Caco-2 (cell line): ENCODE measurements at regions of chr17 and their contacts with region 1.

Region 1: DNA sequence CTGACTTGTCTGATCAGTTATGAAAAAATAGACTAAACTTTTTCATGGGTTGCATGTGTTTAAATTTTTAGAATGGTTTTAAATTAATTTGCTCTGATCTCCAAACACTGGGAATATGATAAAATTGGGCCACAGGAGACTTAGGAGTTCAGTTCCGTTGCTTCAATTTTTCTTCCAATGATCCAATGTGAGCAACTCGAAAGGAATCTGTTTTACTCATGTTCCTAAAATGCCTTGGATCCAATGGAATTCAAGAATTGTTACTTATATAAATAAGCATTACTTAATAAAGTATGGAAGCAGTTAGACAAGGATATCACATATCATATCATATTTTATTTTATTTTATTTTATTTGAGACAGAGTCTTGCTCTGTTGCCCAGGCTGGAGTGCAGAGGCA is 56.0 kb upstream of the NACA2 start:
- DNase-seq: no peak
- H3K4me3 ChIP-seq: no peak overlapping the region
- H3K4me3 Mint-ChIP-seq: no peak overlapping the region
- H3K27ac Mint-ChIP-seq: no peak overlapping the region
- H3K4me1 ChIP-seq: no peaks in the 10 kb centered on the region
- H3K4me1 Mint-ChIP-seq: no peaks in the 10 kb centered on the region
- H3K27me3 ChIP-seq: no peaks in the 10 kb centered on the region
- H3K27me3 Mint-ChIP-seq: peaks cover 7% of the 10 kb centered on the region
- CTCF ChIP-seq: no peak

Region 2: DNA sequence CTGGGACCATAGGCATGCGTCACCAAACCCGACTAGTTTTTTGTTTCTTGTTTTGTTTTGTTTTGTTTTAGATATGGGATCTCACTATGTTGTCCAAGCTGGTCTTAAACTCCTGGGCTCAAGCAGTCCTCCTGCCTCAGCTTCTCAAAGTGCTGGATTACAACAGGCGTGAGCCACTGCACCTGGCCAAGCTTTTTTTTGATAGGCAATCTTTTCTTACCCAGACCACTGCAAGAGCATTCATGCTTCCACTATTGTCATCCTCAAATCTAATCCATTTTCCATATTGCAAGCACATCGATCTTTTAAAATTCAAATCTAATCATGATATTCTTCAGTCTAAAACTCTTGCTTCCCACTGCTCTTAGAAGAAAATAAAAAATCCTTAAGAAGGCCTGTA is 45.8 kb before region 1 on chr17:
- CTCF ChIA-PET with region 1: no interaction called
- POLR2A ChIA-PET with region 1: interaction called, 11 read pairs
- intact Hi-C with region 1: no loop called
- DNase-seq: no peak
- H3K4me3 ChIP-seq: no peak overlapping the region
- H3K4me3 Mint-ChIP-seq: no peak overlapping the region
- H3K27ac Mint-ChIP-seq: no peak overlapping the region
- H3K4me1 ChIP-seq: no peaks in the 10 kb centered on the region
- H3K4me1 Mint-ChIP-seq: no peaks in the 10 kb centered on the region
- H3K27me3 ChIP-seq: no peaks in the 10 kb centered on the region
- H3K27me3 Mint-ChIP-seq: peaks cover 1% of the 10 kb centered on the region
- CTCF ChIP-seq: no peak

Region 3: GRCh38 chr17:61619493-61619892 is 27.6 kb before region 1 on chr17:
- CTCF ChIA-PET with region 1: no interaction called
- POLR2A ChIA-PET with region 1: no interaction called
- intact Hi-C with region 1: no loop called
- DNase-seq: no peak
- H3K4me3 ChIP-seq: no peak overlapping the region
- H3K4me3 Mint-ChIP-seq: no peak overlapping the region
- H3K27ac Mint-ChIP-seq: no peak overlapping the region
- H3K4me1 ChIP-seq: no peaks in the 10 kb centered on the region
- H3K4me1 Mint-ChIP-seq: peaks cover 6% of the 10 kb centered on the region
- H3K27me3 ChIP-seq: no peaks in the 10 kb centered on the region
- H3K27me3 Mint-ChIP-seq: peaks cover 2% of the 10 kb centered on the region
- CTCF ChIP-seq: no peak

Region 4: DNA sequence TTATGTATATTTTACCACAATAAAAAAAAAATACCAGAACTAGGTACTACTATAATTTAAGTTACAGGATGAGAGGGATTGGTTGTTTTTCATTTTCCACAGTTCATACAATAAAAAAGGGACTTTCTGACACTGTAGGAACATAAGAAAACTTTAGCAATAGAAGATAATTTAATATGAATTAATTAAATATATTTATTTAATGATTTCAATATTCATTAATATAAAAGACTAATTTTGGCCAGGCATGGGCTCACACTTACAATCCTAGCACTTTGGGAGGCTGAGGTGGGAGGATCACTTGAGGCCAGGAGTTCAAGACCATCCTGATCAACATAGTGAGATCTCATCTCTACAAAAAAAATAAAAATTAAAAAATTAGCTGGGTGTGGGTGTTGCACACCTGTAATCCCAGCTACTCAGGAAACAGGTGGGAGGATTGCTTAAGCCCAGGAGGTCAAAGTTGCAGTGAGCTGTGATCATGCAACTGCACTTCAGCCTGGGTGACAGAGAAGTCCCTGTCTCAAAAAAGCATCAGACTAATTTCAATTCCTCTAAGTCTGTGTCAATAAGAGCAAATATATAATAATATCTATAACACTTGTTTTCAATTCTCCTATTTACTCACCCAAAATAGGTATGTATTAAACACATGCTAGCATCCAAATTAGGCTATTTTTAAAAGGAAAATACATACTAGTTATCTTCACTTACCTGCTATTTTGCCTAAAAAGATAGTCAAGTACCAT is 136.7 kb after region 1 on chr17:
- CTCF ChIA-PET with region 1: no interaction called
- POLR2A ChIA-PET with region 1: no interaction called
- intact Hi-C with region 1: no loop called
- DNase-seq: no peak
- H3K4me3 ChIP-seq: no peak overlapping the region
- H3K4me3 Mint-ChIP-seq: no peak overlapping the region
- H3K27ac Mint-ChIP-seq: no peak overlapping the region
- H3K4me1 ChIP-seq: no peaks in the 10 kb centered on the region
- H3K4me1 Mint-ChIP-seq: no peaks in the 10 kb centered on the region
- H3K27me3 ChIP-seq: no peaks in the 10 kb centered on the region
- H3K27me3 Mint-ChIP-seq: no peaks in the 10 kb centered on the region
- CTCF ChIP-seq: no peak